Naive thymus-derived CD4-positive, alpha-beta T cell (primary cell): ENCODE measurements at regions of chr18 and their contacts with region 1.

Region 1: GRCh38 chr18:54119524-54120019 is 104.9 kb downstream of the MBD2 start:
- DNase-seq: peak in 6 of 9 donors; percentile 3 to 46 (median 28)
- ATAC-seq: peak; percentile 70
- H3K4me3 ChIP-seq: no peak overlapping the region
- H3K4me3 Mint-ChIP-seq: peak overlapping the region in 9 of 10 donors; percentile 26 to 72 (median 59)
- H3K27ac ChIP-seq: no peak overlapping the region
- H3K27ac Mint-ChIP-seq: peak overlapping the region in 2 of 9 donors; percentile 17 to 21
- H3K4me1 ChIP-seq: no peaks in the 10 kb centered on the region
- H3K4me1 Mint-ChIP-seq: peaks cover 2 to 11% (median 4%) of the 10 kb centered on the region in 7 donors
- H3K27me3 ChIP-seq: no peaks in the 10 kb centered on the region
- H3K27me3 Mint-ChIP-seq: peaks cover 4 to 13% (median 8%) of the 10 kb centered on the region in 5 donors

Region 2: DNA sequence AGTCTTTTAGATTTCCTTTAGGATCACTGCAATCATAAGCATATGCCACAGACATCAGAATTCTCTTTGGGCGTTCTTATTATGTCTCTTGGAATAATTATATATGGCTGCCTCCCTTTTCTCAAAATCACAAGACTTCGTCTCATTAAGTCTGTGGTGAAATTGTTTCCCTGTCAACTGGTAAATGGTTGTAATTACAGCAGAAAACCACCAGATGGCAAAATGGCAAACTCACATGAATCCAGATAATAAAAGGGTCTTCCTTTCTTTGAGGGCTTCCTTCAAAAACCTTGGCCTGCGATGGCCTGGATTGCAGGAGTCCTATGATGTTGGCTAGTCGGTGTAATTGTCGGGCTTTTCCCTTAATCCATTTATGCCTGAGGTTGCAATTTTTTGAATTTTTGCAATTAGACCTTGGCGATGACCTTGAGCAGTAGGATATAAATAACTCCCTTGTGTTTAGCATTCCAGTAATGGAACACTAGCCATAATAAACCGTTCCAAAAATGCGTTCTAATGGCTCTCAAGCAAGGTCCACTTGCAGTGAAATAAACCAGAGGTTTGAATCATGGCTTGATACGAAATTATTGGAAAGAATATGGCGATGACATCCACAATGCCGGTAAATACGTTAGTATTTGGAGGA is 551.5 kb before region 1 on chr18:
- CTCF ChIA-PET with region 1: no interaction called
- POLR2A ChIA-PET with region 1: no interaction called
- intact Hi-C with region 1: loop called in 1 of 2 experiments (anchors 1 kb)
- DNase-seq: peak in 4 of 9 donors; percentile 1 to 10 (median 4)
- ATAC-seq: no peak
- H3K4me3 ChIP-seq: no peak overlapping the region
- H3K4me3 Mint-ChIP-seq: no peak overlapping the region
- H3K27ac ChIP-seq: no peak overlapping the region
- H3K27ac Mint-ChIP-seq: no peak overlapping the region
- H3K4me1 ChIP-seq: no peaks in the 10 kb centered on the region
- H3K4me1 Mint-ChIP-seq: no peaks in the 10 kb centered on the region
- H3K27me3 ChIP-seq: no peaks in the 10 kb centered on the region
- H3K27me3 Mint-ChIP-seq: peaks cover 0 to 11% (median 4%) of the 10 kb centered on the region in 5 donors

Region 3: DNA sequence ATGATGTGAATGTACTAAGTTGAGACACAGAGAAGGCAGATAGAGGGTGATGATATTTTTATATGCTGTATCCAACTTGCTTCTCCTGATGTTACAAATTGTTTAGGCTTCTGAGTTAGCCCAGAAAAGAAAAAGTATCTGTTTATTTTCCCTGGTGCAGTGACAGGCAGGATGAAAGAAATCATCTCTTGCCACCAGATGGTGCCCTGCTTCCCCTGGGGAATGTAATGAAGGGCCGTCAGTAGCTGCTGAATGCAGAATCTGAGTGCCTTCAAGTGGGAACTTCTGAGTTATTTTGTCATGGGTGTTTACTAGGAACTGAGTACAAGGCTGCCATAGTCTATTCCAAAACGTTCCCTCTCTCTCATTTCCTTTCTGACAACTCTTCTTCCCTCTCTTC is 420.7 kb before region 1 on chr18:
- CTCF ChIA-PET with region 1: no interaction called
- POLR2A ChIA-PET with region 1: no interaction called
- intact Hi-C with region 1: loop called in 1 of 2 experiments (anchors 2 kb)
- DNase-seq: no peak
- ATAC-seq: no peak
- H3K4me3 ChIP-seq: no peak overlapping the region
- H3K4me3 Mint-ChIP-seq: no peak overlapping the region
- H3K27ac ChIP-seq: no peak overlapping the region
- H3K27ac Mint-ChIP-seq: no peak overlapping the region
- H3K4me1 ChIP-seq: no peaks in the 10 kb centered on the region
- H3K4me1 Mint-ChIP-seq: no peaks in the 10 kb centered on the region
- H3K27me3 ChIP-seq: no peaks in the 10 kb centered on the region
- H3K27me3 Mint-ChIP-seq: peaks cover 0 to 6% (median 0%) of the 10 kb centered on the region in 5 donors

Region 4: GRCh38 chr18:53909668-53910067 is 209.9 kb before region 1 on chr18:
- CTCF ChIA-PET with region 1: interaction called, 3 read pairs
- POLR2A ChIA-PET with region 1: no interaction called
- intact Hi-C with region 1: loop called in 1 of 2 experiments (anchors 1 kb)
- DNase-seq: no peak
- ATAC-seq: no peak
- H3K4me3 ChIP-seq: no peak overlapping the region
- H3K4me3 Mint-ChIP-seq: no peak overlapping the region
- H3K27ac ChIP-seq: no peak overlapping the region
- H3K27ac Mint-ChIP-seq: no peak overlapping the region
- H3K4me1 ChIP-seq: no peaks in the 10 kb centered on the region
- H3K4me1 Mint-ChIP-seq: no peaks in the 10 kb centered on the region
- H3K27me3 ChIP-seq: no peaks in the 10 kb centered on the region
- H3K27me3 Mint-ChIP-seq: peaks cover 0 to 11% (median 5%) of the 10 kb centered on the region in 5 donors